ENCODE measurements at regions of chr6 and their contacts with region 1.

Region 1: DNA sequence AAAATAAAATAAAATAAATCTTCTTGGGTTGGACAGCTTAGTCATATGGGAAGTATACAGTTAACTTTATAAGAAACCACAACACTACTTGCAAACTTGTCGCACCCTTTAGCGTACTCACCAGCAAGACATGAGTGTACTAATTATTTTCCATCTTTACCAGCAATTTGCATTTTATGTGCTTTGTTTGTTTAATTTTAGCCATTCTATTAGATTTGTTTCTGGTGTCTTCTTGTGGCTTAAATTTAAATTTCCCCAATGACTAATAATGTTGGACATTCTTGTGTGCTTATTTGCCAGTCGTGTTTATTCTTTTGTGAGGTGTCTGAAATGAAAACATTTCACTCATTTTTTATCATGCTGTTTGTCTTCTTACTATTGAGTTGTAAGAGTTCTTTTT is 1172.2 kb upstream of the CITED2 start:
- DNase-seq: no peak
- ATAC-seq: no peak
- H3K4me3 ChIP-seq: no peak overlapping the region
- H3K27ac ChIP-seq: no peak overlapping the region
- H3K4me1 ChIP-seq: no peaks in the 10 kb centered on the region
- H3K27me3 ChIP-seq: no peaks in the 10 kb centered on the region
- CTCF ChIP-seq: no peak
- EP300 ChIP-seq: no peak
- POLR2A ChIP-seq: no peak
- RAD21 ChIP-seq: no peak

Region 2: DNA sequence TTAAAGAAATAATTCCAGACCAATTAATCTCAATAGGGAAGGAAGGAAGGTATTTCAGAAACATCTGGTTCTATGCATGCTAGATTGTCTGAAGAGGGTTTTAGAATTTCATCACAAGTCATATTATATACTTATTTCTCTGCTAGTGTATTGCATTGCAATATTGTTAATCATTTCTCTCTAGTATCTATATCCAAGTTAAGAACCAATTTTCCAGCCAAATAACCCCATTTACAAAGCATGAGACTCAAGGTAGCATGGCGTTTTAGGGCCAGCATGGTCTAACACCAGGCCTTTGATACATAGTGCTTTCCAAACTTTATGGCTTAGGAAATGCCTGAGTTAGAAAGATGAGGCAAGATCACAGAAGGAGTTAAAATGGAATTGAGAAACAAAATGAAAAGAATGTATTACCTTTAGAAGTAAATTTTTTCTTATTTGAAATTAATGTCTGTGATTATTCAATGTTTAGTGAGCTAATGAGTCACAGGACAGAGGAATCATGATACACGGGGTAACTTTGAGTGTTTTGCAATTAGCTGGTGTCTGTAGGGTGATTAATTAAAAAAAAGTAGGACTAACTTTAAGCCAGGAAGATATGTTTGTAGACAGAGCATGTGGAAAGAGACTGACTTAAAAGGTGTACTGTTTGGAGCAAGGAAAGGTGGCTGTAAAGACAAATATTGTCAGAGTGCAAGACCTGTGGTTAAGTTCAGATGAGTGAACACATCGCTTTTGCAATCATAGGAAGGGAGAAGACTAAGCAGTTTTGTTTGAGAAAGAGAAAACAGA is 166.0 kb before region 1 on chr6:
- CTCF ChIA-PET with region 1: no interaction called
- POLR2A ChIA-PET with region 1: no interaction called
- RAD21 ChIA-PET with region 1: no interaction called
- SMC1A ChIA-PET with region 1: no interaction called
- in situ Hi-C with region 1: no loop called
- intact Hi-C with region 1: no loop called
- DNase-seq: no peak
- ATAC-seq: no peak
- H3K4me3 ChIP-seq: no peak overlapping the region
- H3K27ac ChIP-seq: no peak overlapping the region
- H3K4me1 ChIP-seq: no peaks in the 10 kb centered on the region
- H3K27me3 ChIP-seq: no peaks in the 10 kb centered on the region
- CTCF ChIP-seq: no peak
- EP300 ChIP-seq: no peak
- POLR2A ChIP-seq: no peak
- RAD21 ChIP-seq: no peak

Region 3: DNA sequence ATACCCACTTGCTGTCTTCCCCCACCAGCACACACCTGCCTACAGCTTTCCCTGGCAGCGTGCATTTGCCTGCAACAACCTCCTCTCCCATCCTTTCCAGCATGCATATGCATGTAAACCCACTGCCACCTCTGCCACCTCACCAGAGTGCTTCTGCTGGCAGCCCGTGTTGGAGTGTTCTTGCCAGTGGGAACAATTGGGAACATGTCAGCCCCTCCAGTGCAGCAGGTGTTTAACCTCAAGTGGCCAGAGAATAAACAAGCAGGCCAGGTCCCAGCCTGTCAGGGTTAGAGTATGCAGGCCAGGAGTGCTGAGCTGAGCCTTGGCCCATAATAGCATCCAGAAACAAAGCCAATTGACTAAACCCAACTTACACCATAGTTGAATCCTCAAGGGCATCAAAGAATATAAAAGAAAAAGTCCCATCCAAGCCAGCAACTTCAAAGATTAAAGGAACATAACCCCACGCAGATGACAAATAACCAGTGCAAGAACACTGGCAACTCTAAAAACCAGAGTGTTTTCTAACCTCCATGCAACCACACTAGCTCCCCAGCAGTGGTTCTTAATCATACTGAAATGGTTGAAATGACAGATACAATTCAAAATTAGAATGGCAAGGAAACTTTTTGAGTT is 39.9 kb after region 1 on chr6:
- CTCF ChIA-PET with region 1: no interaction called
- POLR2A ChIA-PET with region 1: interaction called, 7 read pairs
- RAD21 ChIA-PET with region 1: interaction called, 8 read pairs
- SMC1A ChIA-PET with region 1: interaction called, 8 read pairs
- in situ Hi-C with region 1: no loop called
- intact Hi-C with region 1: loop called (anchors 2 kb)
- DNase-seq: peak; percentile 60
- ATAC-seq: peak; percentile 94
- H3K4me3 ChIP-seq: no peak overlapping the region
- H3K27ac ChIP-seq: peak overlapping the region; percentile 55
- H3K4me1 ChIP-seq: peaks cover 8% of the 10 kb centered on the region
- H3K27me3 ChIP-seq: no peaks in the 10 kb centered on the region
- CTCF ChIP-seq: no peak
- EP300 ChIP-seq: peak; percentile 89 to 94; a peak in 3 of 4 replicates
- POLR2A ChIP-seq: no peak
- RAD21 ChIP-seq: no peak; the same call in 1 of the 2 replicates

Region 4: GRCh38 chr6:140636908-140637402 is 90.3 kb after region 1 on chr6:
- CTCF ChIA-PET with region 1: no interaction called
- POLR2A ChIA-PET with region 1: no interaction called
- RAD21 ChIA-PET with region 1: interaction called, 7 read pairs
- SMC1A ChIA-PET with region 1: interaction called, 4 read pairs
- in situ Hi-C with region 1: no loop called
- intact Hi-C with region 1: loop called (anchors 2 kb)
- DNase-seq: no peak
- ATAC-seq: peak; percentile 66
- H3K4me3 ChIP-seq: no peak overlapping the region
- H3K27ac ChIP-seq: no peak overlapping the region
- H3K4me1 ChIP-seq: no peaks in the 10 kb centered on the region
- H3K27me3 ChIP-seq: no peaks in the 10 kb centered on the region
- CTCF ChIP-seq: no peak
- EP300 ChIP-seq: no peak
- POLR2A ChIP-seq: no peak
- RAD21 ChIP-seq: no peak

Region 5: DNA sequence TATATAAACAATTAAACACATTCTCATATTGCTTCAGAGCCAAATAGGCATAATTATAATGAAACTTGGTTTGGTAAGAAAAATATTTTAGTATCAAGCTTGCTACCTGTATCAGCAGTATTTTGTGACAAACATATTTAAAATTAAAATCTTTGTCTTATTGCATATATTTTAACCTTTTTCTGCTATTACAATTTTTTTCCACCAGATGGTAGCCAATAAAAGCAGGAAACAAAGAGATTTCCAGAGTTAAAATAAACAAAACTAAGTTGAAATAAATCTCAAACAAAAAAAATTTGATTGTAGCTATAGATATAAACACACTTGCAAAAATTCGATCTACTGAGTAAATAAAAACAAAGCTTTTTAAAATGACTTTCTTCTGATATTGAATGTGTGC is 1094.8 kb after region 1 on chr6:
- CTCF ChIA-PET with region 1: no interaction called
- POLR2A ChIA-PET with region 1: no interaction called
- RAD21 ChIA-PET with region 1: no interaction called
- SMC1A ChIA-PET with region 1: no interaction called
- in situ Hi-C with region 1: no loop called
- intact Hi-C with region 1: no loop called
- DNase-seq: no peak
- ATAC-seq: no peak
- H3K4me3 ChIP-seq: no peak overlapping the region
- H3K27ac ChIP-seq: no peak overlapping the region
- H3K4me1 ChIP-seq: no peaks in the 10 kb centered on the region
- H3K27me3 ChIP-seq: no peaks in the 10 kb centered on the region
- CTCF ChIP-seq: no peak
- EP300 ChIP-seq: no peak
- POLR2A ChIP-seq: no peak
- RAD21 ChIP-seq: no peak

Measured in GM12878 (cell line).